Panc1 (cell line): ENCODE measurements at regions of chr1 and their contacts with region 1.

Region 1: DNA sequence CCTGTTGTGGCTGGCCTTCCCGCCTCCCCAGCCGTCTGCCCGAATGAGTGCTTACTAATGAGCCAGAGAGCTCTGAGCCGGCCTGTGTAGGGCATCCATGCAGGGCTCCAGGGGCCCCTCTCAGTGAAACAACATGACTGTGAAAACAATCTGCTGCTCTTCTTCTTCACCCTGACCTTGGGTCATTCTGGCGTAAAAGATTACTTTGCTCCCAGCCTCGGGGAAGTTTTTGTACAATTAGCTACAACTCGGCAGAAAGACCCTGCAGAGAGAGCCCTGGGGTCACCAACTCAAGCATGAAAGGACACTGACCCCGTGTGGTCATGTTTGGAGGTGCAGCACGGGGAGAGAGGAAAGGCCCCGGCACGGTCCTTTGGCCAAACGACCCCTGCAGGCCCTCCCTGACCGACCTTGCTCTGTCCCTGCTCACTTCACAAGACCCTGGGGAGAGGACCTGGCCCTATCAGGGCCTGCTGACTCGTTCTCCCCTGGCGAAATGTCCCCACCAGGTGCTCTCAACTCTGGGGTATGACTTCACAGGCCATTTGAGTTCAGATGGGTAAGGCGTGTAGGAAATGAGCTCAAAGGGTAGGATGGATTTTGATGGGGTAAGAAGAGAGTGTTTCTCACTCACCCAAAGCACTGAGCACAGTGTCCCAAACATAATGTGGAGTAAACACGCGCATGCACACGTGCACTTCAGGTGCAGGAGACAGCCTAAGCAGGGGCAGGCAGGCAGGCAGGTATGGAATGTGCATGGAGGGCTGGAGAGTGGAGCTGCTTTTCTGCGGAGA is 22.9 kb upstream of the FAM20B start:
- DNase-seq: no peak
- ATAC-seq: peak; percentile 89
- H3K4me3 ChIP-seq: 0 out of 4 replicates have a peak overlapping the region, but pooled peaks of 1 of the 2 experiments have one; percentile 5
- H3K27ac ChIP-seq: no peak overlapping the region
- H3K4me1 ChIP-seq: no peaks in the 10 kb centered on the region
- H3K27me3 ChIP-seq: no peaks in the 10 kb centered on the region
- CTCF ChIP-seq: peak; percentile 94

Region 2: GRCh38 chr1:178542560-178543356 is 460.0 kb before region 1 on chr1:
- CTCF ChIA-PET with region 1: interaction called, 3 read pairs
- POLR2A ChIA-PET with region 1: no interaction called
- in situ Hi-C with region 1: no loop called
- intact Hi-C with region 1: loop called (anchors 2 kb)
- DNase-seq: no peak
- ATAC-seq: peak; percentile 90
- H3K4me3 ChIP-seq: peak overlapping the region; percentile 89 to 95
- H3K27ac ChIP-seq: peak overlapping the region; percentile 84
- H3K4me1 ChIP-seq: peaks cover 12% of the 10 kb centered on the region
- H3K27me3 ChIP-seq: no peaks in the 10 kb centered on the region
- CTCF ChIP-seq: peak; percentile 99

Region 3: GRCh38 chr1:178774263-178774662 is 228.5 kb before region 1 on chr1:
- CTCF ChIA-PET with region 1: interaction called, 8 read pairs
- POLR2A ChIA-PET with region 1: no interaction called
- in situ Hi-C with region 1: no loop called
- intact Hi-C with region 1: loop called (anchors 2 kb)
- DNase-seq: no peak
- ATAC-seq: no peak
- H3K4me3 ChIP-seq: no peak overlapping the region
- H3K27ac ChIP-seq: no peak overlapping the region
- H3K4me1 ChIP-seq: no peaks in the 10 kb centered on the region
- H3K27me3 ChIP-seq: no peaks in the 10 kb centered on the region
- CTCF ChIP-seq: peak; percentile 43; the same call in 1 of the 2 replicates

Region 4: GRCh38 chr1:178806665-178807300 is 196.0 kb before region 1 on chr1:
- CTCF ChIA-PET with region 1: interaction called, 12 read pairs
- POLR2A ChIA-PET with region 1: interaction called, 3 read pairs
- in situ Hi-C with region 1: no loop called
- intact Hi-C with region 1: no loop called
- DNase-seq: no peak
- ATAC-seq: no peak
- H3K4me3 ChIP-seq: no peak overlapping the region
- H3K27ac ChIP-seq: no peak overlapping the region
- H3K4me1 ChIP-seq: no peaks in the 10 kb centered on the region
- H3K27me3 ChIP-seq: no peaks in the 10 kb centered on the region
- CTCF ChIP-seq: no peak